Naive thymus-derived CD8-positive, alpha-beta T cell (primary cell): ENCODE measurements at regions of chr3 and their contacts with region 1.

Region 1: GRCh38 chr3:72745146-72745999 is 102.9 kb downstream of the SHQ1 start:
- DNase-seq: no peak
- ATAC-seq: no peak
- H3K4me3 Mint-ChIP-seq: no peak overlapping the region
- H3K27ac Mint-ChIP-seq: peak overlapping the region in 1 of 10 donors; percentile 37
- H3K4me1 Mint-ChIP-seq: peaks cover 21 to 41% (median 40%) of the 10 kb centered on the region in 4 donors
- H3K27me3 Mint-ChIP-seq: no peaks in the 10 kb centered on the region

Region 2: GRCh38 chr3:72756900-72757299 is 11.5 kb after region 1 on chr3:
- POLR2A ChIA-PET with region 1: interaction called, 85 read pairs
- DNase-seq: peak in 9 of 10 donors; percentile 22 to 86 (median 64)
- ATAC-seq: peak; percentile 98 to 99
- H3K4me3 Mint-ChIP-seq: peak overlapping the region; percentile 64 to 82 (median 76)
- H3K27ac Mint-ChIP-seq: peak overlapping the region; percentile 89 to 99 (median 96)
- H3K4me1 Mint-ChIP-seq: peaks cover 23 to 69% (median 63%) of the 10 kb centered on the region in 4 donors
- H3K27me3 Mint-ChIP-seq: no peaks in the 10 kb centered on the region

Region 3: DNA sequence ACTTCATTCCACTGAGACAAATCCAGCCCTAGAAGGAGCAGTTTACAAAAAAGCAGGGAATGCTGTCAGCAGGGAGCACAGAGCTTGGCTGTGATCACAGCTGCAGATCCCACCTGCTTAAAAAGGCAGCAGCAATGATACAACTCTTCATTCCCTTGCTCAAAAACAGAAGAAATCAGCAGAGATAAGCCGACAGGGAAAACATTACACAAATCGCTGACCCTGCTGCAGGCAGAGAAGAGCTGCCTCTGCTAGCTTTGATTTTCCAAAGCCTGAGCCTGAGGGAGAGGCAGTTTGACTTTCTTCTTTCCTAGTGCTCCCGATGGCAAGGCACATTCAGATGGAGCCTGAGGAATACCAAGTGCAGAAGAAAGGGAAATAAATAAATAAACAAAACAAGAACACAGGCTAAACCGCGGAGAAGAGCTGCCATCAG is 22.7 kb after region 1 on chr3:
- POLR2A ChIA-PET with region 1: no interaction called
- DNase-seq: no peak
- ATAC-seq: no peak
- H3K4me3 Mint-ChIP-seq: no peak overlapping the region
- H3K27ac Mint-ChIP-seq: no peak overlapping the region
- H3K4me1 Mint-ChIP-seq: peaks cover 2 to 19% (median 6%) of the 10 kb centered on the region in 4 donors
- H3K27me3 Mint-ChIP-seq: no peaks in the 10 kb centered on the region

Region 4: DNA sequence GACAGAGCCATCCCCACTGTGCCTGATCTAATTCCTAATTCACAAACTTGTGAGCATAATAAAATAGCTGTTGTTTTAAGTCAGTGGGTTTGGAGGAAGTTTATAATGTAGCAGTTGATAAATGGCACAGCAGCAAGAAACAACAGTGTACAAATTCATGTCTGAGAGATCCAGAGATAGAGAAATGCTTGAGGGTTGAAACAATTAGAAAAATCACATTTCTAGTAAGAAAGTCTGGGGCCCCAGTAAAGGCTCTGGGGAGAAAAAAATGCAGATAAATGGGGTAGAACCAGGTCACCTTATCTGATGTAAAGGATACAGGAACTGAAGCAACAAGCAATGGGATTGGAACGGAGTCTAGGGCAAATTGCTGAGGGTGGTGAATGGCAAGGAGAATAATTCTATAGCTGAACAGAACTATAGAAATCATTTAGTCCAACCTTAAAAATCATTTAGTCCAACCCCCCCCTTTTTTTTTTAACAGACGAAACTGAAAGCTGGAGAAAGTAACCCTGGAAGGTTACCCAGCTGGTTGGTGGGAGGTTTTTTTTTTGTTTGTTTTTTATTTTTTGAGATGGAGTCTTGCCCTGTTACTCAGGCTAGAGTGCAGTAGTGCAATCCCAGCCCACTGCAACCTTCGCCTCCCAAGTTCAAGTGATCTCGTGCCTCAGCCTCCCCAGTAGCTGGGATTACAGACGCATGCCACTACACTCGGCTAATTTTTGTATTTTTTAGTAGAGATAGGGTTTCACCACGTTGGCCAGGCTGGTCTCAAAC is 117.1 kb after region 1 on chr3:
- POLR2A ChIA-PET with region 1: no interaction called
- DNase-seq: no peak
- ATAC-seq: no peak
- H3K4me3 Mint-ChIP-seq: no peak overlapping the region
- H3K27ac Mint-ChIP-seq: no peak overlapping the region
- H3K4me1 Mint-ChIP-seq: no peaks in the 10 kb centered on the region
- H3K27me3 Mint-ChIP-seq: peaks cover 0 to 3% (median 1%) of the 10 kb centered on the region in 5 donors